ENCODE measurements at regions of chr22 and their contacts with region 1.

Region 1: GRCh38 chr22:37571258-37571991 is 8.5 kb downstream of the LGALS2 start:
- DNase-seq: no peak
- ATAC-seq: no peak

Region 2: GRCh38 chr22:37383341-37383740 is 188.1 kb before region 1 on chr22:
- intact Hi-C with region 1: no loop called
- DNase-seq: no peak
- ATAC-seq: no peak

Region 3: GRCh38 chr22:37538590-37539357 is 32.7 kb before region 1 on chr22:
- intact Hi-C with region 1: loop called (anchors 5 kb)
- DNase-seq: peak; percentile 97
- ATAC-seq: peak; percentile 97